Endothelial cell of umbilical vein (primary cell): ENCODE measurements at regions of chr17 and their contacts with region 1.

Region 1: DNA sequence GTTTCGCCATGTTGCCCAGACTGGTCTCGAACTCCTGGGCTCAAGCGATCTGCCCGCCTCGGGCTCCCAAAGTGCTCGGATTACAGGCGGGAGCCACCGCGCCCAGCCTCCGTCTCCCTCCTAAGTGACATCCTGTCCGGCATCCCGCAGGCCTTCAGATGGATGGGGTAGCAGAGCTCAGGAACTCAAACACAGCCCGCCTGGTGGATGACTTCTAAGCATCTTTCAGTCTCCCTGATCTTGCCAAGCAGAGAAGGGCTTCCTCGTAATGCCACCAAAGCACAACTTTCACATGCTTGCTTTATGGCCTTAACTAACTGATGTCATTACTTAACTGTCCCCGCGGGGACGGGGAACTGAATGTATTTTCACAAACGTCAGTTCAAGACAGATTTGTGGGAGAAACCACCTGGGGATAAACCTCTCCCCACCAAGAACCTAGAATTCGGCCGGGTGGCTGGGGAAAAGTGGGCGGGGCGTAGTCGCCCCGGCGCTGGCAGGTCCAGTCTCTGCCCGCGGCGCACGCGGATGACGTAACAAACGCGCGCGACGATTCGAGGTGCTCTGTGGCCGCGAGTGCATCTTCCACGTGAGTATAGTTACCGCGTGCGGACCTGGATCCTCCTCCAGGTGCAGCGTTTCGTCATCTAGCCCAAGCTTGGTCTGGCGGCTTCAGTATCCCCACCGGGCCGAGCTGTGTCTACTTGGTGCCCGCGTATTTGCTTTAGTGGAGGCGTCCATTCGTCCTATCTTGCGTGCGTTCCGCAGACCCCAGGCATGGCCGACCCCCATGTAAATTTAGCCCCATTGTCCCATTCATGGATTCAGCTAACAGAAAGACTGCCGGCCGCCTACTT is at the start of gene PFAS:
- DNase-seq: peak; percentile 90
- H3K4me3 ChIP-seq: peak within 1 kb of the TSS; percentile 69 to 98 (median 80)
- H3K27ac ChIP-seq: peak within 1 kb of the TSS; percentile 73
- H3K4me1 ChIP-seq: peaks cover 14% of the 10 kb centered on the region
- H3K27me3 ChIP-seq: no peaks in the 10 kb centered on the region
- CTCF ChIP-seq: peak in 1 of 2 donors; percentile 6
- POLR2A ChIP-seq: peak; percentile 79
- total RNA-seq, gene PFAS: 84.1 and 108 TPM in 2 replicates

Region 2: GRCh38 chr17:7745748-7746470 is 503.1 kb before region 1 on chr17:
- CTCF ChIA-PET with region 1: no interaction called
- POLR2A ChIA-PET with region 1: no interaction called
- dilution Hi-C with region 1: no loop called
- intact Hi-C with region 1: no loop called
- DNase-seq: peak; percentile 98
- H3K4me3 ChIP-seq: no peak overlapping the region
- H3K27ac ChIP-seq: peak overlapping the region; percentile 58
- H3K4me1 ChIP-seq: peaks cover 17% of the 10 kb centered on the region
- H3K27me3 ChIP-seq: peaks cover 0 to under 1% of the 10 kb centered on the region in 2 experiments
- CTCF ChIP-seq: peak in 1 of 2 donors; percentile 18
- POLR2A ChIP-seq: no peak

Region 3: DNA sequence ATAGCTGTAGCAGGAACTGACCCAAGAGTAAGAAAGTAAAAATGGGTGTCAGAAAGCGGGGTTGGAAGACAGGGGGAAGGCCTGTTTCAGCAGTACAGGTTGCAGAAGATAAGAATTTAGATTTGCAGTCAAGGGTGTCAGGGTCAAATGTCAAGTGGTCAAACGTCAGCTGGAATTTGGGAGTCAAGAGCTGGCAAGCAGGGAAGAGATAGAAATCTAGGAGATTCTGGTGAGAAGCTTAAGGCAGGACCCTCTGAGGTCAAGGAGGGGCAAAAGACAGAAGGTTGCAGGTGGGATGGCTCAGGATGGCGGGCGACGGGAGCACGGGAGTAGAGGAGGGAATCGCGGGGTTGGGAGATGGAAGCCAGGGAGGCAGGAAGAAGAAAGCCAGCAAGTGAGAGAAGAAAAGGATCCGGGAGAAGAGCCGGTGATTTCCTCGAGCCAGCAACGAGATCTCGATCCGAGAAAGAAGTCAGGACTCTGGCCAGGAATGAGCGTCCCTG is 45.9 kb after region 1 on chr17:
- CTCF ChIA-PET with region 1: interaction called, 10 read pairs
- POLR2A ChIA-PET with region 1: interaction called, 3 read pairs
- dilution Hi-C with region 1: no loop called
- intact Hi-C with region 1: loop called (anchors 1 kb)
- DNase-seq: no peak
- H3K4me3 ChIP-seq: peak overlapping the region; percentile 47 to 90 (median 61)
- H3K27ac ChIP-seq: peak overlapping the region; percentile 86
- H3K4me1 ChIP-seq: peaks cover 6% of the 10 kb centered on the region
- H3K27me3 ChIP-seq: no peaks in the 10 kb centered on the region
- CTCF ChIP-seq: no peak
- POLR2A ChIP-seq: no peak

Region 4: DNA sequence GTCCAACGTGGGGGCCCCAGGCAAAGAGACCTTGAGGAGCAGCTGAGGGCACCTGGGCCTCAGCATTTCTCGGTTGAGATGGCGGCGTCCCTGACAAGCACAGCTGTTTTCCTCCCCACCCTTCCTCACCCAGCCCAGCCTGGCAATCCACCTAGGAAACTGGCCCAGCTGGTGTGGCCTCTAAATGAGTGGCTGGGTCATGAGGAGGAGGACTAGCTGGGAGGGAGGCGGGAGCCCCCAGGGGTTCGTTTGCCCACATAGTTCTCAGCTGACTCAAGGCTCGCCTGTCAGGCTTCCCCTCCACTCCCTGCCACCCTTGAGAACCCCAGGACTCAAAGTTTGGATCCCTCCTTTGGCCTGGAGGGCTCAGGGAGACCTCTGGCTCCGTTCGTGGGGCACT is 142.7 kb after region 1 on chr17:
- CTCF ChIA-PET with region 1: no interaction called
- POLR2A ChIA-PET with region 1: no interaction called
- dilution Hi-C with region 1: no loop called
- intact Hi-C with region 1: no loop called
- DNase-seq: no peak
- H3K4me3 ChIP-seq: no peak overlapping the region
- H3K27ac ChIP-seq: no peak overlapping the region
- H3K4me1 ChIP-seq: peaks cover 4% of the 10 kb centered on the region
- H3K27me3 ChIP-seq: peaks cover 8 to 12% of the 10 kb centered on the region in 2 experiments
- CTCF ChIP-seq: no peak
- POLR2A ChIP-seq: no peak